H1 (cell line): ENCODE measurements at regions of chr9 and their contacts with region 1.

Region 1: DNA sequence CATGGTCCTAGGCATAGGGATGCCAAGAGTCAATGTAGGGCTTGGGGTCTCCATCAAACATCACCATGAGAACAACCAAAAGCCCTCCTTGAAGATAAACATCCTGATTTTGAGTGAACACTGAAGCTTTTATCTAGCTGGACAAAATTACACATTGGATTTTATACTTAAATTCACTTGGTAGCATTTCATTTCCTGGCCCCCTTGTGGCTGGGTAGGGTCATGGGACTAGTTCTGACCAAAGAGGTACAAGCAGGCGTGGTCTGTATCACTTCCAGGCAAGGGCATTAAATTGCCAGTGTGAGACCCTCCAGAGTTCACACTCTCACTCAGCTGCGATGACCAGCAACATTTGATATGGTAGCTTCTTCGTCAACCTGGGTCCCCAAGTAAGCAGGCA is 320.3 kb downstream of the ACTL7B start:
- DNase-seq: no peak
- H3K4me3 ChIP-seq: no peak overlapping the region
- H3K27ac ChIP-seq: no peak overlapping the region
- H3K4me1 ChIP-seq: no peaks in the 10 kb centered on the region
- H3K27me3 ChIP-seq: no peaks in the 10 kb centered on the region
- CTCF ChIP-seq: peak; percentile 27 to 55 (median 38)
- EP300 ChIP-seq: no peak
- POLR2A ChIP-seq: no peak
- RAD21 ChIP-seq: peak; percentile 24 to 45

Region 2: GRCh38 chr9:107760454-107761237 is 774.9 kb before region 1 on chr9:
- CTCF ChIA-PET with region 1: no interaction called
- POLR2A ChIA-PET with region 1: no interaction called
- DNase-seq: no peak
- H3K4me3 ChIP-seq: no peak overlapping the region
- H3K27ac ChIP-seq: no peak overlapping the region
- H3K4me1 ChIP-seq: no peaks in the 10 kb centered on the region
- H3K27me3 ChIP-seq: no peaks in the 10 kb centered on the region
- CTCF ChIP-seq: no peak
- EP300 ChIP-seq: no peak
- POLR2A ChIP-seq: no peak
- RAD21 ChIP-seq: no peak

Region 3: GRCh38 chr9:108517651-108518365 is 17.7 kb before region 1 on chr9:
- CTCF ChIA-PET with region 1: interaction called, 14 read pairs
- POLR2A ChIA-PET with region 1: no interaction called
- DNase-seq: no peak
- H3K4me3 ChIP-seq: no peak overlapping the region
- H3K27ac ChIP-seq: no peak overlapping the region
- H3K4me1 ChIP-seq: no peaks in the 10 kb centered on the region
- H3K27me3 ChIP-seq: no peaks in the 10 kb centered on the region
- CTCF ChIP-seq: no peak
- EP300 ChIP-seq: no peak
- POLR2A ChIP-seq: no peak
- RAD21 ChIP-seq: no peak

Region 4: GRCh38 chr9:108549150-108549599 is 13.6 kb after region 1 on chr9:
- CTCF ChIA-PET with region 1: interaction called, 17 read pairs
- POLR2A ChIA-PET with region 1: no interaction called
- DNase-seq: no peak
- H3K4me3 ChIP-seq: no peak overlapping the region
- H3K27ac ChIP-seq: no peak overlapping the region
- H3K4me1 ChIP-seq: no peaks in the 10 kb centered on the region
- H3K27me3 ChIP-seq: no peaks in the 10 kb centered on the region
- CTCF ChIP-seq: no peak
- EP300 ChIP-seq: no peak
- POLR2A ChIP-seq: no peak
- RAD21 ChIP-seq: no peak

Region 5: GRCh38 chr9:108579757-108580439 is 44.4 kb after region 1 on chr9:
- CTCF ChIA-PET with region 1: no interaction called
- POLR2A ChIA-PET with region 1: no interaction called
- DNase-seq: no peak
- H3K4me3 ChIP-seq: no peak overlapping the region
- H3K27ac ChIP-seq: no peak overlapping the region
- H3K4me1 ChIP-seq: no peaks in the 10 kb centered on the region
- H3K27me3 ChIP-seq: no peaks in the 10 kb centered on the region
- CTCF ChIP-seq: no peak
- EP300 ChIP-seq: no peak
- POLR2A ChIP-seq: no peak
- RAD21 ChIP-seq: no peak